GM12878 (cell line): ENCODE measurements at regions of chr14 and their contacts with region 1.

Region 1: GRCh38 chr14:76151398-76152339 is at the start of gene GPATCH2L:
- DNase-seq: peak; percentile 73
- ATAC-seq: peak; percentile 90
- H3K4me3 ChIP-seq: peak within 1 kb of the TSS; percentile 98
- H3K27ac ChIP-seq: peak within 1 kb of the TSS; percentile 92
- H3K4me1 ChIP-seq: peaks cover 6% of the 10 kb centered on the region; the same call in 1 of the 2 replicates
- H3K27me3 ChIP-seq: no peaks in the 10 kb centered on the region
- CTCF ChIP-seq: no peak
- EP300 ChIP-seq: no peak
- POLR2A ChIP-seq: peak; percentile 92
- RAD21 ChIP-seq: no peak
- polyA plus RNA-seq, gene GPATCH2L: 9.1 to 12.9 TPM

Region 2: DNA sequence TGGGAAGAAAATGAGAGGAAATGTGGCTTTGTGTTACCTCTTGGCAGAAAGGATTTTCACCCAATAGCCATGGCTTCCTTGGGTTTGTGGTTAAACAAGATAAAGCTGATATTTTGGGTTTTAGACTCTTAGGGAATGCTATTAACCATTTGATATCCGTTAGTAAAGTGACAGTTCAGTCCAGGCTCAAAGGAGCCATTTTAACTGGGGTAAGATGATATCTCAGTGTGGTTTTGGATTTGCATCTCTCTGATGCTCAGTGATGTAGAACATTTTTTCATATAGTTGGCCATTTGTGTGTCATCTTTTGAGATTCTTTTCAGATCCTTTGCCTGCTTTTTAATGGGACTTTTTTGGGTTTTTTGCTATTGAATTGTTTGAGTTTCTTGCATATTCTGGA is 136.0 kb before region 1 on chr14:
- CTCF ChIA-PET with region 1: no interaction called
- POLR2A ChIA-PET with region 1: no interaction called
- RAD21 ChIA-PET with region 1: no interaction called
- SMC1A ChIA-PET with region 1: no interaction called
- in situ Hi-C with region 1: no loop called
- intact Hi-C with region 1: no loop called
- DNase-seq: peak; percentile 12
- ATAC-seq: peak; percentile 76
- H3K4me3 ChIP-seq: no peak overlapping the region
- H3K27ac ChIP-seq: no peak overlapping the region
- H3K4me1 ChIP-seq: peaks cover 9% of the 10 kb centered on the region
- H3K27me3 ChIP-seq: no peaks in the 10 kb centered on the region
- CTCF ChIP-seq: no peak
- EP300 ChIP-seq: no peak
- POLR2A ChIP-seq: no peak
- RAD21 ChIP-seq: no peak

Region 3: DNA sequence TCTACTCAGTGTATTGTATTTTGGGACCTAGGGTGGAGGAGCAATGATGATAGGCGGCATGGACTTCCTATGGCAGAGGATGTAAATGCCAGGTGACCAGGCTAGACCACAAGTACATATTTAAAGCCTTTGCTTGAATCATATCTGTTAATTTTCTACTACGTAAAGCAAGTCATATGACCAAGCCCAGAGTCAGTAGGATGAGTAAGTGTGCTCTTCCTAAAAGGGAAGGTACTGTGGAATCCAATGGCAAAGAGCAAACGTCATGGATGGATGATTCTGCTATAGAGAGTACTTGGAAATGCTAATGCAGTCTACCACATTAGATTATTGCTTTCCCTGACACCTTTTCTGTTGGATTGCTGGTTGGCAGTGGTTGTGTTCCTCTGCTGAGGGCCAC is 16.9 kb after region 1 on chr14:
- CTCF ChIA-PET with region 1: interaction called, 3 read pairs
- POLR2A ChIA-PET with region 1: interaction called, 11 read pairs
- RAD21 ChIA-PET with region 1: interaction called, 4 read pairs
- SMC1A ChIA-PET with region 1: interaction called, 27 read pairs
- in situ Hi-C with region 1: no loop called
- intact Hi-C with region 1: no loop called
- DNase-seq: no peak
- ATAC-seq: peak; percentile 24; the same call in 1 of the 3 replicates
- H3K4me3 ChIP-seq: no peak overlapping the region
- H3K27ac ChIP-seq: no peak overlapping the region
- H3K4me1 ChIP-seq: no peaks in the 10 kb centered on the region
- H3K27me3 ChIP-seq: no peaks in the 10 kb centered on the region
- CTCF ChIP-seq: no peak
- EP300 ChIP-seq: no peak
- POLR2A ChIP-seq: no peak
- RAD21 ChIP-seq: no peak

Region 4: GRCh38 chr14:76181546-76181945 is 29.9 kb after region 1 on chr14:
- CTCF ChIA-PET with region 1: interaction called, 38 read pairs
- POLR2A ChIA-PET with region 1: interaction called, 10 read pairs
- RAD21 ChIA-PET with region 1: interaction called, 19 read pairs
- SMC1A ChIA-PET with region 1: interaction called, 16 read pairs
- in situ Hi-C with region 1: no loop called
- intact Hi-C with region 1: loop called (anchors 2 kb)
- DNase-seq: no peak
- ATAC-seq: no peak
- H3K4me3 ChIP-seq: no peak overlapping the region
- H3K27ac ChIP-seq: no peak overlapping the region
- H3K4me1 ChIP-seq: peaks cover 17% of the 10 kb centered on the region
- H3K27me3 ChIP-seq: no peaks in the 10 kb centered on the region
- CTCF ChIP-seq: peak; percentile 11 to 25 (median 16); a peak in 1 of 6 replicates
- EP300 ChIP-seq: no peak
- POLR2A ChIP-seq: no peak
- RAD21 ChIP-seq: 0 out of 2 replicates have a peak, but pooled peaks have one; percentile 7

Region 5: GRCh38 chr14:76191297-76191696 is 39.6 kb after region 1 on chr14:
- CTCF ChIA-PET with region 1: interaction called, 3 read pairs
- POLR2A ChIA-PET with region 1: interaction called, 7 read pairs
- RAD21 ChIA-PET with region 1: interaction called, 19 read pairs
- SMC1A ChIA-PET with region 1: interaction called, 116 read pairs
- in situ Hi-C with region 1: no loop called
- intact Hi-C with region 1: loop called (anchors 2 kb)
- DNase-seq: no peak
- ATAC-seq: peak; percentile 48
- H3K4me3 ChIP-seq: no peak overlapping the region
- H3K27ac ChIP-seq: peak overlapping the region; percentile 99
- H3K4me1 ChIP-seq: peaks cover 48% of the 10 kb centered on the region
- H3K27me3 ChIP-seq: no peaks in the 10 kb centered on the region
- CTCF ChIP-seq: no peak
- EP300 ChIP-seq: no peak
- POLR2A ChIP-seq: no peak
- RAD21 ChIP-seq: no peak

Region 6: GRCh38 chr14:76203086-76204001 is 51.7 kb after region 1 on chr14:
- CTCF ChIA-PET with region 1: interaction called, 3 read pairs
- POLR2A ChIA-PET with region 1: interaction called, 8 read pairs
- RAD21 ChIA-PET with region 1: interaction called, 38 read pairs
- SMC1A ChIA-PET with region 1: interaction called, 116 read pairs
- in situ Hi-C with region 1: no loop called
- intact Hi-C with region 1: no loop called
- DNase-seq: peak; percentile 95
- ATAC-seq: peak; percentile 87
- H3K4me3 ChIP-seq: no peak overlapping the region
- H3K27ac ChIP-seq: peak overlapping the region; percentile 94
- H3K4me1 ChIP-seq: peaks cover 51% of the 10 kb centered on the region
- H3K27me3 ChIP-seq: no peaks in the 10 kb centered on the region
- CTCF ChIP-seq: no peak
- EP300 ChIP-seq: peak; percentile 63 to 71; a peak in 3 of 4 replicates
- POLR2A ChIP-seq: peak; percentile 75
- RAD21 ChIP-seq: peak; percentile 27